Right ventricle myocardium superior (tissue), 1 donor: ENCODE measurements at regions of chr2 and their contacts with region 1.

Region 1: GRCh38 chr2:112584134-112584890 is at the start of gene CHCHD5:
- DNase-seq: peak; percentile 97
- ATAC-seq: peak; percentile 95
- total RNA-seq, gene CHCHD5: 18.7 TPM

Region 2: DNA sequence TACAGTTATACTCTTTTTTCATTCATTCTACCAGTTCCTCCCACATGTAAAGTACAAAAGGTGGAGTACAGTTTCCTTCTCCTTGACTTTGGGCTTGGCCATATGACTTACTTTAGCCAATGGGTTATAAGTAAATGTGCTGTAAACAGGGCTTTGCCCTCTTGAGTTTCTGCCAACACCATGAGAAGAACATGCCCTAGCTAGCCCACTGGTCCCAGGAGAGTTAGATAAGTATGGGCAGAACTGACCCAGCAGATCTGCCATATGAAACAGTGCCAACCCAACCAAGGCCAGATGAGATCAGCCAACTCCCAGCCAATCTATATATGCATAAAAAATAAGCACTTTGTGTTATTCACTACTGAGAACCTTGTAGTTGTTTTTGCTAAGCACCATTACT is 355.0 kb before region 1 on chr2:
- intact Hi-C with region 1: no loop called
- DNase-seq: no peak
- ATAC-seq: no peak

Region 3: DNA sequence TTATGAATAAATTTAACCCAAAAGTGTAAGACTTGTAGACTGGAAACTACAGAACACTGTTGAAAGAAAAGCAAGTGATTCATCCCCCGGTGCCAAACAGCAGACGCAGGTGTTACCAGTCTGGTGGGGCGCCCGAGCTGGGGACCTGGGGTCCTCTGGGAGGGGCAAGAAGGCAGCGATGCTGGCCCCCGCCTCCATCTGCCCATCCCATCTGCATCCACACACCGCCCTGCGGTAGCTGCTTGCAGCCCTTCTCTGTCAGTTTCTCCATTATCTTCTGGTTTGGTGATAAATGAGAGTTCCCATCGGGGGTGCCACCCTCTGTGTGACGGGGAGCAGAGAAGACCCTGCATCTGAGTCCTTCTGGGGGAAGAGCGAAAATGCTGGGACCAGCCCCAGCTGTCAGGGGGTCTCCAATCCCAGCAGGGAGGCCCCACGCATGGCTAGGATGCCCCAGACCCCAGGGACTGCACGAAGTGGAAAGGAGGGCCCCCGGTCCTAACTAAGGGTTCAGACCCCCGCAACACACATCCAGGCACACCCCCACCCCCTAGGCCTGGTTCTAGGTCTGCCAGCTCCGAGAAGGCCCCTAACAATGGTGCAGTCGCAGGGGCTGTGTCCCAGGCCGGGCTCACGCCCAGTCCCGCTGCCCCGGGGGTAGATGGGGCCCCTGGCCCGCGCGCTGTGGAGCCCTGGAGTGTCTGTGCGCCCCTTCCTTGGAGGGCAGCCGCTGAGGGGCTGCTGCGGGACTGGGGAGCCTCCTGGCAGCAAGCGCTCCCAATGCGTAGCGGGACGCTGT is 150.2 kb before region 1 on chr2:
- intact Hi-C with region 1: no loop called
- DNase-seq: no peak
- ATAC-seq: no peak

Region 4: DNA sequence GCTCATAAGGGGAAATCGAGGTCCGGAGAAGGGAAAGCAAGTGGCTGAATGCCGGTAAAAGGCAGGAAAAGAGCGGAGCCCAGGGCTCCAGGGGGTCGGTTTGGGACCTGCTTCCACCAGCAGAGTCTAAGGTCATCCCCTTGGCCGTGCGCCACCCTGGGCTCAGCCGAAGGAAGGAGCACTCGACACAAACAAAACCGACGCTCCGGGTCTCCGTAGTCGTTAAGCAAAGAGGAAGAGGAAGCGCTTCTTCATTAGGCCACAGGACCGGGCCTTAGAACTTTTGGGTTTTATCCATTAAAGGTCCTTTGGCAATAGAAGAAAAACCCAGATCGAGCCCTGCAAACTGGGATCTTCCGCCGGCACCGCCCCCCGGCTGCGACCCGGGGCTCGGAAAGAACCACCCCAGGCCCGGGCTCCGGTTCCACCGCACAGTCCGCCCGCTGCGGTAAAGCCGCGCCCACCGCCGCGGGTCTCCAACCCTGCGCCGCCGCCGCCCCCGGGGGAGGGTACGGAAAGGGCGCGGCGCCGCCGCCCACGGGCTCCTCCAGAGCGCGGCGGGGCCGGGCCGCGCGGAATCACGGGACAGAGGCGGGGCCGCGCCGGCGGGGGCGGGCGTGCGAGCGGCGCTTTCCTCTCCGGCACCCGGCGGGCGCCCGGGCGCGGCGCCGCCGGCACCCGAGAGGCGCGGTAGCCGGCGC is 102.6 kb before region 1 on chr2 and contains the start of gene TTL:
- intact Hi-C with region 1: loop called (anchors 2 kb)
- DNase-seq: peak; percentile 89
- ATAC-seq: peak; percentile 96
- total RNA-seq, gene TTL: 47.9 TPM

Region 5: DNA sequence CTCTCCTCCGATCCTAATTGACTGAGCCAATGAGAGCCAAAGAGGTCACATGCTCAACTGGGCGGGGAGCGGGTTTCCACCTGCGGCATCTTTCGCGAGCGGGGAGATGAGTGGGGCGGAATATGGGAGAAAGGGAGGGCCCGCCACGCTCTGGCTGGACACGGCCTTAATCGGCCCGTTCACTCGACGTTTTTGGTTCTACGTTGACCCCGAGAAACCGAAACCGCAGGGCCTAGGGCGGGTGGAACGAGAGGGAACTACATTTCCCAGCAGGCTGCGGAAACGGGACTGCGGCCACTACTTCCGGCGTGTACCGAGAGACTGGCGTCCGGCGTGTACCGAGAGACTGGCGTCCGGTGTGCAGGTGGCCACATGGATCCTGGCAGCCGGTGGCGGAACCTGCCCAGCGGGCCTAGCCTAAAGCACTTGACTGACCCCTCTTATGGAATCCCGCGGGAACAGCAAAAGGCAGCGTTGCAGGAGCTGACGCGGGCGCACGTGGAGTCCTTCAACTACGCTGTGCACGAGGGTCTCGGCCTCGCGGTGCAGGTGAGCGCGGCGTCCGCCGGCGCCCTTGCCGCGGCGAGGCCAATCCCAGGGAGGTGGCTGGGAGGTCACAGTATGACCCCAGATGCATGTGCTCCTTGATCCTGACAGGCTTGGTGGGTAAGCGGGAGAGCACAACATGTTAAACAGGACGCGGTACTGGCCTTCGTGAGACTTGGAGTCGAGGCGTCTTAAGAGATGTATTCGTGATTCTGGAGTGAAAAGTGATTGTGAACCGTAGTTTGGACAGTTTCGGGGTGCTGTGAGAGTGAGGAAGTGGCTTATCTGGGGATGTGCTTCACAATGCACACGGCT is 42.0 kb before region 1 on chr2 and contains the start of gene POLR1B:
- intact Hi-C with region 1: loop called (anchors 5 kb)
- DNase-seq: peak; percentile 91
- ATAC-seq: peak; percentile 98
- total RNA-seq, gene POLR1B: 9.1 TPM

Region 6: DNA sequence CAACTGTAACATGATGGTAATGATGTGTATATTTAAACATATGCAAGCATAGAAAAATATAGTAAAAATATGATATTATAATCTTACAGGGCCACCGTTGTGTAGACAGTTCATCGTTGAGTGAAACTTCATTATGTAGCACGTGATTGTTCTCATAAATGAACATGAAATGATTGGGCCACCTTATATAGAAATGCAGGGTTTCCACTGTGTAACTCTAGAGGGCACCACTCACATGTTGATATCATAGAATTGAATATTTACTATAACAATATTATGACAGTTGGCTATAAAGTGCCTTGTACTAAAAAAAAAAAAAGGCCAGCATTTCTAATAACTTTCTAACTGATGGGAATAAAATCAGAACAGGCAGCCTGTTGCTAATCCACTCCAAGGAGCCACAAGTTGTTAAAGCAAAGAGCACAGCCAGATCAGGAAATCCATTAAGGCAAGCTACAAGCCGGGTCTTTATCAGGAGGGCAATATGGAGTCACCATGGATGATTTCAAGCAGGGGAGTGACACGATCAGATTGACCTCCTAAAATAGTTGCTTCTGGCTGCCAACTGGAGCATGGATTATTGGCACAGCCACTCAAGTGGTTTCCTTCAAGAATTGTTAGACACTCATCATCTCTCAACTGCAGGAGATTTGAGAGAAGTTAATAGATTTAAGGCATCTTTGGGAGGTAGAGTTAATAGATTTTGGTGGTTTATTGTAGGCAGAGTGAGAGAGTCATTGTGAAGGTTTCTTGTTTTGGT is 500.1 kb after region 1 on chr2:
- intact Hi-C with region 1: no loop called
- DNase-seq: no peak
- ATAC-seq: no peak